ENCODE measurements at regions of chr9 and their contacts with region 1.

Region 1: GRCh38 chr9:133184962-133185361 is 21.2 kb upstream of the GBGT1 start:
- DNase-seq: peak; percentile 90
- H3K4me3 ChIP-seq: no peak overlapping the region
- H3K27ac ChIP-seq: no peak overlapping the region
- H3K4me1 ChIP-seq: no peaks in the 10 kb centered on the region
- H3K27me3 ChIP-seq: peaks cover 47% of the 10 kb centered on the region
- CTCF ChIP-seq: peak; percentile 71

Region 2: DNA sequence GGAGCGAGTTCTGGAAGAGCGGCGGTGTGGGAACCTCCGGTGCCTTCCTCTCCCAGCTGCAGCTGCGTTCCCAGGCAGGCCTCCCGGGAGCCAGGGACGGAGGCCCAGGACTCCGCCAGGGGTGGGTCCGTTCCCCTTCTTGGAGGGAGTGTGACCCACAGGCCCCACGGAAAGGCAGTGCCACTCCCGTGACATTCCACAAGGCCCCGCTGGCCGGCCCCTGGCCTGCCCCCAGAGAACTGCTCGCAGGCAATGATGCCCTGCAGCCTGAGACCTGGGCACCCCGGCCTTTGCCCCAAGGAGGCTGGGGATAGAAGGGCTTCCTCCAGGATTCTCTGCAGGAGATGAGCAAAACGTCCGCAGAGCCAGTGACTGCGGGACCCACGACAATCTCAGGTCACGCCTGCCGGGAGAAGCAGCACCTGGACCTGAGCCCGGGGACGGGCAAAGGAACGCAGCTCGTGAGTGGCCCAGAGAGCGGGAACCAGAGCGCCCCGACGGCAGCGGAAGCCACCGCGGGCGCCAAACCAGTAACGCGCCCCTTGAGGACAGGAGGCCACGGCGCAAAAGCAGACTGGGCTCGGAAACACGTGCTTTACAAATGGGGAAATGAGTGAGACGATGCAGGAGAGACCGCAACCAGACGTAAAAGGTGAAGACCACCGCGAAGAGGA is 14.8 kb after region 1 on chr9:
- CTCF ChIA-PET with region 1: interaction called, 11 read pairs
- POLR2A ChIA-PET with region 1: no interaction called
- intact Hi-C with region 1: no loop called
- DNase-seq: no peak
- H3K4me3 ChIP-seq: no peak overlapping the region
- H3K27ac ChIP-seq: no peak overlapping the region
- H3K4me1 ChIP-seq: no peaks in the 10 kb centered on the region
- H3K27me3 ChIP-seq: peaks cover 38% of the 10 kb centered on the region
- CTCF ChIP-seq: no peak

Region 3: GRCh38 chr9:133252301-133252780 is 67.4 kb after region 1 on chr9:
- CTCF ChIA-PET with region 1: no interaction called
- POLR2A ChIA-PET with region 1: no interaction called
- intact Hi-C with region 1: no loop called
- DNase-seq: no peak
- H3K4me3 ChIP-seq: no peak overlapping the region
- H3K27ac ChIP-seq: no peak overlapping the region
- H3K4me1 ChIP-seq: no peaks in the 10 kb centered on the region
- H3K27me3 ChIP-seq: peaks cover 13% of the 10 kb centered on the region
- CTCF ChIP-seq: no peak

Region 4: GRCh38 chr9:133327834-133328484 is 143.0 kb after region 1 on chr9:
- CTCF ChIA-PET with region 1: no interaction called
- POLR2A ChIA-PET with region 1: no interaction called
- intact Hi-C with region 1: loop called (anchors 2 kb)
- DNase-seq: no peak
- H3K4me3 ChIP-seq: no peak overlapping the region
- H3K27ac ChIP-seq: no peak overlapping the region
- H3K4me1 ChIP-seq: no peaks in the 10 kb centered on the region
- H3K27me3 ChIP-seq: no peaks in the 10 kb centered on the region
- CTCF ChIP-seq: no peak

Region 5: GRCh38 chr9:133726401-133727276 is 541.7 kb after region 1 on chr9:
- CTCF ChIA-PET with region 1: no interaction called
- POLR2A ChIA-PET with region 1: no interaction called
- intact Hi-C with region 1: loop called (anchors 5 kb)
- DNase-seq: peak; percentile 62
- H3K4me3 ChIP-seq: no peak overlapping the region
- H3K27ac ChIP-seq: no peak overlapping the region
- H3K4me1 ChIP-seq: no peaks in the 10 kb centered on the region
- H3K27me3 ChIP-seq: no peaks in the 10 kb centered on the region
- CTCF ChIP-seq: peak; percentile 54

Measured in A673 (cell line).